Posterior vena cava (tissue), 2 donors: ENCODE measurements at regions of chr5 and their contacts with region 1.

Region 1: DNA sequence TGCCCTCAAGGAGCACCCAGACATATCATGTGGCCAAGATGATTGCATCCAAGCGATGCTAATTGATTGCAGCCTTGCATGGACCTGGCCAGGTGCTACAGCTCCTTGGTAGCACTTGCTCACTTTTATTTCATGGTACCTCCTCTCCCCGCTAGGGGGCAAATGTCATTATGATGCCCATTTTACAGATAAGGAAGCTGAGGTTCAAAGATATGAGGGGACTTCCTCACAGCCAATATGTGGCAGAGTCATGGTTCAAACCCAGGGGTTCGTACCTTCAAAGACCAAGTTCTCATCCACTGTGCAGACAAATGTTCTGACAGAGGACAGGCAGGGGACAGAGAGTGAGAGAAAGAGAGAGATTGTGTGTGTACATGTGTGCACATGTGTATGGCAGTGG is 21.9 kb upstream of the KCNMB1 start:
- DNase-seq: no peak

Region 2: GRCh38 chr5:169670769-169671525 is 740.2 kb before region 1 on chr5:
- intact Hi-C with region 1: no loop called
- DNase-seq: no peak

Region 3: DNA sequence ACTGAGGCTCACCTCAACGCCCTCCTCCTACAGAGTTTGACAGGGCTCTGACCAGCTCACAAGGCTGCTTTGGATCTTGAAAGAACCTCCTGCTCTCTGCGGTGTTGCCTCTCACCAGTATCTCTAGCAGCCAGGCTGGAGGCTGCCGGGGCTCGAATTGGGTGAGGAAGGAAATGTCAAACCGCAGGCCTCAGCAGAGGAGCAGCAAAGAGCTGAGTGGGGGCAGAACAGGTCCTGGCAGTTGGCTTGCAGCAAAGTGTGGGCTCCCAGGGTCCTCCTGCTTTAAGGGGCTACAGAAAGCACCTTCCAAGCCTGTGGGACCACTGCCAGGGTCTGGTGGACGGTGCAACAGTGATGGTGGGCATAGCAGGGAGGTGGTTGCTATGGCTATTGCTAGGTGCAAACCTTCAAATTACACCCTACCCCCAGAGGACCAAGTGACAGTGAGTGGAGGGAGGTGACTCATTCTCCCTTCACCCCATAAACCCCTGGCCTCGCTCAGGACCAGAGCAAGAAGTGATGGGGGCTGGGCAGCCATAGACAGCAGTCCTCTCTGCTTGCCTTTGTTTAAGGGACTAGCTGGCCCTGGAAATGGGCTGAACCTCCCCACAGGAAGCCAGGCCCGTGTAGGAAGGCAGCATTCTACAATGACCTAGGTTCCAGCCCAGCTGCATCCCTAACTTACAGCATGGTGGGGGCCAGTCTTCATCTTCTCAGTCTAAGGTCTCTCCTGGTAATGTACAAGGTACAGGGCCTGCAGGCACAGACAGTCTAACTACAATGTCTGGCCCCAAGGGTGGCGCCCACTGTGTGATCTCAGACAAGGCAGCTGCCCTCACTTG is 132.3 kb before region 1 on chr5:
- intact Hi-C with region 1: loop called in 1 of 2 experiments (anchors 10 kb)
- DNase-seq: peak; percentile 91

Region 4: DNA sequence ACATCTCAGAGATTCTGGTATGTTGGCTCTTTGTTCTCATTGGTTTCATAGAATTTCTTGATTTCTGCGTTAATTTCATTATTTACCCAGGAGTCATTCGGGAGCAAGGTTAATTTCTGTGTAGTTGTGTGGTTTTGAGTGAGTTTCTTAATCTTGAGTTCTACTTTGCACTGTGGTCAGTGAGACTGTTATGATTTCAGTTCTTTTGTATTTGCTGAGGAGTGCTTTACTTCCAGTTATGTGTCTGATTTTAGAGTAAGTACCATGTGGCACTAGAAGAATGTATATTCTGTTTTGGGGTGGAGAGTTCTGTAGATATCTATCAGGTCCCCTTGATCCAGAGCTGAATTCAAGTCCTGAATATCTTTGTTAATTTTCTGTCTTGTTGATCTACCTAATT is 462.9 kb after region 1 on chr5:
- intact Hi-C with region 1: no loop called
- DNase-seq: no peak